ENCODE measurements at regions of chr2 and their contacts with region 1.

Region 1: GRCh38 chr2:219087361-219087760 is 26.6 kb upstream of the IHH start:
- DNase-seq: no peak
- H3K4me3 ChIP-seq: no peak overlapping the region
- CTCF ChIP-seq: no peak

Region 2: DNA sequence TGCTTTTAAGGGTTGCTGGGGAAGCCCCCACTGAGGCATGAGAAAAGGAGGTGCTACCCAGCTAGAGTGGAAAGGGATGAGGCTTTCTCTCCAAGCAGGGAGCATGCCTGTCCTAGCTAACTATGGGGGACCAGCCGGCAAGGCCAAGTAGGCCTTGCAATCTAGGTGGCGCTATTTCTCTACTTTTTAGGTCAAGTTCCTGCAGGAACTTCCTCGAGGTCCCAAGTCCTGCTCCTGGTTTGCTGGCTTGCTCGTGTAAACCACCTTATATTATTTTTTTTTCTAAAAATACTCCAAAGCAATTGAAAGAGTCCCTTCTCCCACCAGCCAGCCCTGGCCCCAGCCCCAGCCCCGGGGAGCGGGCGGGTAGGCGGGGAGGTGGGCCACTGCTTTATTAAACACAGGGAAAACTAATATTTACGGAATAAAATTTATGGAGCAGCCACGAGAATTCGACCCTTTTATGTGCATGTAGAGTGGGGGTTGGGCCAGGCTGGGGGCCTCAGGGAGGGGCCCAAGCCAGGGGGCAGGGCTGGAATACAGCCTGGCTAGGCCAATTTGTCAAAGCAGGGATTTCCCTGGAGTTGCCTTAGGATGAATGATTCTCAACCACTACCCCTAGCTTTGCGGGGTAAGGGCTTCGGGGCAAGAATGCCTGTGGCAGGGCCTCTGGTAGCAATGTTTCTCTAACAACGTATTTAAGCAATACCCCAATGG is 13.8 kb before region 1 on chr2:
- CTCF ChIA-PET with region 1: interaction called, 64 read pairs
- POLR2A ChIA-PET with region 1: no interaction called
- DNase-seq: peak; percentile 16
- H3K4me3 ChIP-seq: no peak overlapping the region
- CTCF ChIP-seq: peak; percentile 52

Region 3: DNA sequence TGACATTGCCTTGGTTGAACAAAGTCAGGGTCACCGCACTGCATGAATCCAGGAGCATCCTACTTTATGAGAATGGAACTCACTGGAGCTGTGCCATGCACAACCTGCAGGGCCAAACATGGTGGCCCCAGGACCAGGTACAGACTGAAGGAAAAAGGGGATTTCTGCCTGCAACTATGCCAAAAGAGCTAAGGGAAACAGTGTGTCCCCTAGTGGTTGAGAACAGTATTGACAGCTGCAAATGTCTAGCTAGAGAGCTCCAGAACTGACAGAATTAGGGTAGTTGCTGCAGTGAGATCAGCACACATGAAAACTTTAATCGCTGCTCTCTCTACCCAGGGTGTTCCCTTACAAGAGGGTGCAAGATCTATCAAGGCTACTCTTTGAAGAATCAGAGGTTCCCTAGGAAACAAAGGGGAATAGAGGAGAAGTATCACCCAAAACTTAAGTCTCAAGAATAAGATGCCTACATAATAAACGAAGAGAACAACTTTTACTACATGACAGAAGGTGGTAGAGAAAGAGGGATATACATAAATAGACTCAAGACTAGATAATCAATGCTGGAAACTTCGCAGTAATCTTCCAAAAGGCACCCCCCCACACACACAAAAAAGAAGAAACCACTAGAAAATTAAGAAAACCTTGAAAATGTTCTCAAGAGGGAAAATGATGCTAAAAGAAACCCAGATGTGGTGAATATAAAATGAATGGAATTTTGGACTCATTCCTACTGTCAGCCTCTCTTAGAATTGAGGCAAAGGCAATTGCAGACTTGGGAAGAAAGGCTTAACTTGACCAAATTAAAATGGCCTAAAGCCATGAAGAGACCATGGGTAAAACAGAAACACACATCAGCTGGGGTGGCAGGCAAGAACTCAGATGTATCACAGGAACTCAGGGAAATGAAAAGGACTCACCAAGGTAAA is 17.0 kb after region 1 on chr2:
- CTCF ChIA-PET with region 1: interaction called, 34 read pairs
- POLR2A ChIA-PET with region 1: interaction called, 3 read pairs
- DNase-seq: no peak
- H3K4me3 ChIP-seq: no peak overlapping the region
- CTCF ChIP-seq: peak; percentile 71

Region 4: DNA sequence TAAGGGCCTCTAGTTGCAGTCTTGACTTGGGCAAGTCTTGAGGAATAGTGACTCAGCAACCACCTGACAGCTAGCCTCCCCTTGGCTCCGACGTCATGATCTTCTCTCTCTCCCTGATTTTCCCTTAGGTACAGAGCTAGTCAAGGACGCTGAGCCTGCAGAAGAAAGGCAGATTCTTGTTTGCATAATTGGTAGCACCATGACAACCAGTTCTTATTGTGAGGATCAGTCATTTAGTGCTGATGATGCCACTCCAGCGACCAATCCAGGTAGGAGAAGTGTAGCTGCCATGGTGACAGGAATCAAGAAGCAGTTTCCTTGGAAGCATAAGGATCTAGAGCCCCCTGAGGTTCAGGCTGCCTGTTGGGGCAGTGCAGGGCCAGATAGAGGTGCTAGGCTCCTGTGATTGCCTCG is 248.0 kb after region 1 on chr2:
- CTCF ChIA-PET with region 1: no interaction called
- POLR2A ChIA-PET with region 1: no interaction called
- DNase-seq: no peak
- H3K4me3 ChIP-seq: no peak overlapping the region
- CTCF ChIP-seq: no peak

Measured in AG04449 (cell line).